ENCODE measurements at regions of chr11 and their contacts with region 1.

Region 1: DNA sequence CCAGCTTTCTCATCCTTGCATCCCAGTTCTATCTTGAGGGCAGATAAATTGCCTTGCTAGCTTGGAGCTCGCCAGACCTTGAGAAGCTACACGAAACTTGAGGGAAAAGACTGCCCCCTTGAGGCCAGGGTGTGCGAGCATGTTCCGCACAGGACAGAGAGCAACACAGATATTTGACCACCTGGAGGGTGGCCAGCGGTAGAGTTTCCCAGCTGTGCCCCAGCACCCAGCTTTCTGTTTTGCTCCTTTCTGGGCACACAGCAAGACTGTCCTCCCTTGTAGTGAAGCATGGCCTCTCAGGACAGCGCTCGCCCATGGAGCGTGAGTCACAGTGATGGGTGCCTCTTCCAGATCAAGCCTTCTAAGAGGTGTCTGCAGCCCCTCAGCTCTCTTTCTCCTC is 23.5 kb downstream of the SPATA19 start:
- DNase-seq: peak in 3 of 5 donors; percentile 40 to 68 (median 60)
- ATAC-seq: peak in 3 of 4 donors; percentile 62 to 91 (median 73)
- H3K4me3 ChIP-seq: no peak overlapping the region
- H3K27ac ChIP-seq: no peak overlapping the region
- H3K4me1 ChIP-seq: no peaks in the 10 kb centered on the region
- H3K27me3 ChIP-seq: no peaks in the 10 kb centered on the region
- CTCF ChIP-seq: peak; percentile 48 to 71 (median 62)
- POLR2A ChIP-seq: no peak

Region 2: GRCh38 chr11:133134314-133135173 is 687.2 kb before region 1 on chr11:
- intact Hi-C with region 1: loop called in 2 of 10 experiments (anchors 5 to 10 kb)
- DNase-seq: peak in 4 of 5 donors; percentile 49 to 55 (median 51)
- ATAC-seq: peak in 3 of 4 donors; percentile 72 to 83 (median 80)
- H3K4me3 ChIP-seq: no peak overlapping the region
- H3K27ac ChIP-seq: no peak overlapping the region
- H3K4me1 ChIP-seq: peaks cover 0 to 10% (median 0%) of the 10 kb centered on the region in 12 donors
- H3K27me3 ChIP-seq: peaks cover 0 to 14% (median 0%) of the 10 kb centered on the region in 9 donors
- CTCF ChIP-seq: peak; percentile 75 to 89 (median 82)
- POLR2A ChIP-seq: no peak

Region 3: DNA sequence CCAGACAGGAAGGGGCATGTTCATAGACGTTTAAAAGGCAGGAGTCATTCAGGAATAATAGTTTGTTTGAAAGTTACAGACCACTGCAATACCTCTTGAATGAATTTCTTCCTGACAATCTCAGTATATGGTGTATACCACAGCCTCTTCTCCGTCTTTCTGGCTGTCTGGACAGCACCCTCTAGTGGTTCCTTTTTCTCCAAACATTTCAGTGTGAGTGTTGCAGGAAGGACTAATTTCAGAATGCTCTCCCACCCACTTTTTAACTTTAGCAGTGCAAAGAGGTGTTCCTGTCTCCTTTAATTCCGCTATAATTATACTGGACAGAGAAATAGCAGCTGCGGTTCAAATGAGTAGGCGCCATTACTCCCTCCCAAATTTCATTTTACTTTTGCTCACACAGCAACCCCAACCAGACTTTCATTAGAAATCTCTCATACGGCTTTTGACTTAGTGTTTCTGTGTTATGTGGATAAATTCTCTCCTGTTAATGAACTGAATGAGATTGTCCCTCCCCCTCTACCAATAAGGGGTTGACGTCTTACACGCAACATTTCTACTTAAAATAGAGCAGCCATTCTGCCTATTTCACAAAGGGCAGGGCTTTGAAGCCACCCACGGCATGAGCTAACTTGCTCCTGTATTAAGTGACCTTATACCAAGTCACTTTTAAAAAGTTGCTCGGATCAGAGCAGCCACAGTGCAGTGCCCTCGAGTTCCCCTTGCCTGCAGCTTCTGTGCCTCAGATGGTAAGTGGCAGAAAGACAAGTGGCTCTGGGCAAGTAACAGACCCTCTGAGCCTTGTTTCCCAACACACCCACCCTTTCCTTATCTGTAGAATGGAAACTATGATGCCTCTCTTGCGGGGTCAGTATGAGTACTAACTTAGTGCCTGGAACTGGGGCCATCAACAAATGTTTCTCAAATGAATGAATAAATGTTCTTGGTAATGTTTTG is 658.0 kb before region 1 on chr11:
- intact Hi-C with region 1: loop called in 1 of 10 experiments (anchors 5 kb)
- DNase-seq: peak in 2 of 5 donors; percentile 30 to 45
- ATAC-seq: peak; percentile 64 to 93 (median 82)
- H3K4me3 ChIP-seq: peak overlapping the region in 3 of 12 donors; percentile 7 to 35 (median 24)
- H3K27ac ChIP-seq: peak overlapping the region in 3 of 12 donors; percentile 25 to 53 (median 39)
- H3K4me1 ChIP-seq: peaks cover 0 to 8% (median 0%) of the 10 kb centered on the region in 12 donors
- H3K27me3 ChIP-seq: peaks cover 0 to 13% (median 0%) of the 10 kb centered on the region in 9 donors
- CTCF ChIP-seq: peak; percentile 59 to 85 (median 76)
- POLR2A ChIP-seq: no peak

Region 4: DNA sequence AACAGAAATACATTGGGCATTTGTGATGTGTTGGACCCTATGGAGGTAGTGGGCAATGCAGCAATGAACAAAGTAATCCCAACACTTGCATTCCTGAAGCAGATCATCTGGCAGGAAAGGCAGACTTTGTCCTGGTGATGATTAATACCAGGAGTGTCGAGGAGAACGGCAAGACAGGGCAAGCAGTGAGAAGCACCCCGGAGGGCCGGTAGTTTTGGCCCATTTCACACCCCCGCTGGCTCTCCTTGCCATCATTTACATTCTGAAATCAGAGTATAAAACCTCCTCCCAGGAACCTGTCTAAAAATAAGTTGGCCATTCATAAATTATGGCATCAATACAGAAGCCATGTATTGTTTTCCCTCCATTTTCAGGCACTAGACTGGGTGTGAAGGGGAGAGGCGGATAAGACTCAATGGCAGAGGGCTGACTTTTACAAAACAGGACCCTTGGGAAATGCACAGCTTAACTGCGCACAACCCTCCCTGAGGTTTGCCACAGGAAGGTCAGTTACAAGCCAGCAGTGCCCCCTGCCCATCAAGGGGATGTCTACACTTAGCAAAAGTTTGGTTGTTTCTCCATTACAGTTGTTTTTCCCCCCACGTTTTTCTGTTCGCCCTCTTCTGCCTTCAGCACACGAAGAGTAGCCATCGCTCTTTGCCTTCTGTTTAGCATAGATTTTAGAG is 345.1 kb before region 1 on chr11:
- intact Hi-C with region 1: no loop called
- DNase-seq: no peak
- ATAC-seq: no peak
- H3K4me3 ChIP-seq: no peak overlapping the region
- H3K27ac ChIP-seq: no peak overlapping the region
- H3K4me1 ChIP-seq: no peaks in the 10 kb centered on the region
- H3K27me3 ChIP-seq: no peaks in the 10 kb centered on the region
- CTCF ChIP-seq: no peak
- POLR2A ChIP-seq: no peak

Region 5: GRCh38 chr11:133619973-133620372 is 201.8 kb before region 1 on chr11:
- intact Hi-C with region 1: loop called in 3 of 10 experiments (anchors 5 to 10 kb)
- DNase-seq: no peak
- ATAC-seq: peak in 3 of 4 donors; percentile 49 to 75 (median 69)
- H3K4me3 ChIP-seq: no peak overlapping the region
- H3K27ac ChIP-seq: no peak overlapping the region
- H3K4me1 ChIP-seq: no peaks in the 10 kb centered on the region
- H3K27me3 ChIP-seq: peaks cover 0 to 5% (median 0%) of the 10 kb centered on the region in 9 donors
- CTCF ChIP-seq: peak in 11 of 12 donors; percentile 13 to 48 (median 34)
- POLR2A ChIP-seq: no peak

Region 6: GRCh38 chr11:133762538-133762937 is 59.2 kb before region 1 on chr11:
- intact Hi-C with region 1: no loop called
- DNase-seq: no peak
- ATAC-seq: no peak
- H3K4me3 ChIP-seq: no peak overlapping the region
- H3K27ac ChIP-seq: no peak overlapping the region
- H3K4me1 ChIP-seq: no peaks in the 10 kb centered on the region
- H3K27me3 ChIP-seq: peaks cover 0 to 3% (median 0%) of the 10 kb centered on the region in 9 donors
- CTCF ChIP-seq: no peak
- POLR2A ChIP-seq: no peak

Measured in heart left ventricle (tissue), 16 donors.